B cell (primary cell): ENCODE measurements at regions of chr1 and their contacts with region 1.

Region 1: DNA sequence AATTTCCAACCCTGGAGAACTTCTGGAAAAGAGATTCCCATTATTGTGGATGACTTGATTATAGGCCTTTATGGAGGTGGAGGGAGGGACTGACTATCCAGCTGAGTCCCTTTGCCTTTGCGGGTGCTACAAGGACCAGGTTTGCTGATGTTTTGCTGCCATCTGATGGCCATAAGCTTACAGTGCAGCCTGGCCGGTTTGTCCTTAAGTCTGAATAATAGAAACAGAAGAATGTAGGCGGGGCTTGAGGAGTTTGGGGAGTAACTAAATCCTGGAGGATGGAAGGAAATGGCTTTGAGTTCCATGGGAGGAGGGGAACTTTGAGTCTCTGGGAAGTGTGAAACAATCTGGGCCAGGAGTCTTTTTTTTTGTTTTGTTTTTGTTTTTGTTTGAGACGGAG is 55.7 kb upstream of the CD1D start:
- DNase-seq: peak; percentile 86
- ATAC-seq: peak; percentile 89
- H3K4me3 ChIP-seq: no peak overlapping the region
- H3K4me3 Mint-ChIP-seq: no peak overlapping the region
- H3K27ac ChIP-seq: no peak overlapping the region
- H3K27ac Mint-ChIP-seq: peak overlapping the region; percentile 5
- H3K4me1 ChIP-seq: peaks cover 0 to 5% of the 10 kb centered on the region in 2 donors
- H3K4me1 Mint-ChIP-seq: peaks cover 3% of the 10 kb centered on the region
- H3K27me3 ChIP-seq: peaks cover 0 to 18% (median 9%) of the 10 kb centered on the region in 4 experiments
- H3K27me3 Mint-ChIP-seq: peaks cover 25% of the 10 kb centered on the region
- CTCF ChIP-seq: peak; percentile 86

Region 2: GRCh38 chr1:157369808-157370521 is 755.0 kb before region 1 on chr1:
- CTCF ChIA-PET with region 1: interaction called, 12 read pairs
- POLR2A ChIA-PET with region 1: no interaction called
- intact Hi-C with region 1: loop called (anchors 2 kb)
- DNase-seq: peak; percentile 72
- ATAC-seq: peak; percentile 72
- H3K4me3 ChIP-seq: no peak overlapping the region
- H3K4me3 Mint-ChIP-seq: no peak overlapping the region
- H3K27ac ChIP-seq: no peak overlapping the region
- H3K27ac Mint-ChIP-seq: no peak overlapping the region
- H3K4me1 ChIP-seq: no peaks in the 10 kb centered on the region
- H3K4me1 Mint-ChIP-seq: no peaks in the 10 kb centered on the region
- H3K27me3 ChIP-seq: no peaks in the 10 kb centered on the region
- H3K27me3 Mint-ChIP-seq: peaks cover 5% of the 10 kb centered on the region
- CTCF ChIP-seq: peak; percentile 97

Region 3: DNA sequence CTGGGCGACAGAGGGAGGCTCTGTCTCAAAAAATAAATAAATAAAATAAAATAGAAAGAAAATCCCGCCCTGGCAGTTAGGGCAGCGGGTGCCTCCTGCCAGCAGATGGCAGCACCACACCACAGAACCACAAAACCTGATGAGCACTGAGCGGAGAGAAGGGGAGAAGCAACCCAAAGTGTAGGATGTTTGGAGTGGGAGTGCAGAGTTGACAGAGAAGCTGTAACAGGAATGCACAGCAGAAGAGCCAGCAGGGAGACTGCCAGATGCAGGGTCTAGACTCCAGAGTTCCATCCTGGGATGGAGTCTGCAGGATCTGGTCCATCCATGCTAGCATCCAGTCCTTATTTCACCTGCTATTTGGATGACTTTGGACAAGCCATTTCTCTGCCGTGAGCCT is 161.3 kb before region 1 on chr1:
- CTCF ChIA-PET with region 1: interaction called, 353 read pairs
- POLR2A ChIA-PET with region 1: interaction called, 3 read pairs
- intact Hi-C with region 1: loop called (anchors 1 kb)
- DNase-seq: peak; percentile 74
- ATAC-seq: peak; percentile 57
- H3K4me3 ChIP-seq: no peak overlapping the region
- H3K4me3 Mint-ChIP-seq: no peak overlapping the region
- H3K27ac ChIP-seq: no peak overlapping the region
- H3K27ac Mint-ChIP-seq: no peak overlapping the region
- H3K4me1 ChIP-seq: no peaks in the 10 kb centered on the region
- H3K4me1 Mint-ChIP-seq: no peaks in the 10 kb centered on the region
- H3K27me3 ChIP-seq: peaks cover 0 to 16% (median 8%) of the 10 kb centered on the region in 4 experiments
- H3K27me3 Mint-ChIP-seq: peaks cover 25% of the 10 kb centered on the region
- CTCF ChIP-seq: peak; percentile 98

Region 4: DNA sequence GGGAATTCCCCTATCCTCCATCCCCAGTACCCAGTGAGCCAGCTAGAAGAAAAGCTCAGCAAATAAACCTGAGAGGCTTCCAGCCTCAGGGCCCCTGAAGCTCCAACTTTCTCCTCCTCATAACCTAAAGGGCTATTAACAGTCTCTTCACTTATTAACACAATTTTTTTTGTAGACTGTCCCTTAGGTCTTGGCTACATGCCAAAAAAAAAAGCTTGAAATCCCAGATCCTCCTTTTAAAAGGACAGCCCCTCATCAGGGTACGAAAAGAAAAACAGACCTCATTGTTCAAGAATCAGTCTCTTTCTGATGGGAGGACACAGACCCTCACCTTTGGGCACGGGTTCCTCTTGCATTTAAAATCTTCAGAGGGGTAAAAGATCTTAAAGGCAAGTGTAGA is 17.1 kb before region 1 on chr1:
- CTCF ChIA-PET with region 1: interaction called, 77 read pairs
- POLR2A ChIA-PET with region 1: no interaction called
- intact Hi-C with region 1: no loop called
- DNase-seq: no peak
- ATAC-seq: no peak
- H3K4me3 ChIP-seq: no peak overlapping the region
- H3K4me3 Mint-ChIP-seq: no peak overlapping the region
- H3K27ac ChIP-seq: no peak overlapping the region
- H3K27ac Mint-ChIP-seq: no peak overlapping the region
- H3K4me1 ChIP-seq: no peaks in the 10 kb centered on the region
- H3K4me1 Mint-ChIP-seq: peaks cover 2% of the 10 kb centered on the region
- H3K27me3 ChIP-seq: peaks cover 0 to 8% (median 2%) of the 10 kb centered on the region in 4 experiments
- H3K27me3 Mint-ChIP-seq: peaks cover 19% of the 10 kb centered on the region
- CTCF ChIP-seq: no peak

Region 5: DNA sequence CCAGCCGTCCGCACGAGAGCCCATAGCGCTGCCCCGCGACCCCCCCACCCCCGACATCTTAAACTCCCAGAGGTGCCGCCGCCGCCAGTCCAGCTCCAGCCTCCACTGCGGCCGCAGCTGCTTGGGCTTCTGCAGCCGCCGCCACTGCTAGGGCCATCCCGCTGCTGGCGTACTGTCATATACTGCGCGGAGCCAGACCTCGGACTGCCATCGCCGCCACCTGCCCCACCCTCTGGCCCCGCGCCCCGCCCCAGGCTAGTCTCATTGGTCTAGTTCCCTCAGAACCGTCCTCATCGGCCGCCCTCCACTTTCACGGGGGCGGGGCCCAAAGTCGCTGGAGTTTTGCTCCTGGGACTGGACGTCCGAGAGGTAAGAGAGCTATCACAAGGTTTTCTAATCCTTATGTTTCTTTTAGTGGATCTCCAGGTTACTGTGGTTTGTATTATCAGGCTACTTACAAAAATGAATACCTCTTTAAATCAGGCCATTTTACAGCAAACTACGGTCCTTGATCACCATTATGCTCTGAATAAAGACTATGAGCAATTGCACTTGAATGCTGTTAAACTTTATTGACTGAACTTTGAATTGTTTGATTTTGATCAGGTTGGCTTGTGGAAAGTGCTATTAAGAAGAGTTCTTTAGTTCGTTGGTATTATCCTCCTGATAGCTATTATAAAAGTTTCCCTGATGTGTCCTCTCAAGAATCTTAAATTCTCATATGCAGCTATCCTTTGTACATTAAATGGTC is 52.9 kb after region 1 on chr1:
- CTCF ChIA-PET with region 1: interaction called, 61 read pairs
- POLR2A ChIA-PET with region 1: no interaction called
- intact Hi-C with region 1: no loop called
- DNase-seq: peak; percentile 65
- ATAC-seq: peak; percentile 69
- H3K4me3 ChIP-seq: peak overlapping the region; percentile 39 to 62 (median 50)
- H3K4me3 Mint-ChIP-seq: peak overlapping the region; percentile 82
- H3K27ac ChIP-seq: peak overlapping the region; percentile 22 to 53
- H3K27ac Mint-ChIP-seq: peak overlapping the region; percentile 86
- H3K4me1 ChIP-seq: peaks cover 58 to 72% of the 10 kb centered on the region in 2 donors
- H3K4me1 Mint-ChIP-seq: peaks cover 73% of the 10 kb centered on the region
- H3K27me3 ChIP-seq: no peaks in the 10 kb centered on the region
- H3K27me3 Mint-ChIP-seq: no peaks in the 10 kb centered on the region
- CTCF ChIP-seq: no peak